Activated T-helper 1 cell treated with anti-CD3 and anti-CD28 coated beads, Interleukin-12 subunit alpha, Interleukin-12 subunit beta, Interleukin-2, Interleukin-4 antibody, amounts not matched to agents 30 ng/mL and 10 ng/mL and 1 ng/mL, durations not matched to agents 14 hours and 24 hours and 36 hours (primary cell): ENCODE measurements at regions of chr14 and their contacts with region 1.

Region 1: GRCh38 chr14:76514613-76515012 is 138.7 kb downstream of the ESRRB start:
- DNase-seq: no peak
- H3K4me3 Mint-ChIP-seq: no peak overlapping the region
- H3K27ac Mint-ChIP-seq: no peak overlapping the region
- H3K4me1 Mint-ChIP-seq: no peaks in the 10 kb centered on the region
- H3K27me3 Mint-ChIP-seq: peaks cover 3% of the 10 kb centered on the region

Region 2: DNA sequence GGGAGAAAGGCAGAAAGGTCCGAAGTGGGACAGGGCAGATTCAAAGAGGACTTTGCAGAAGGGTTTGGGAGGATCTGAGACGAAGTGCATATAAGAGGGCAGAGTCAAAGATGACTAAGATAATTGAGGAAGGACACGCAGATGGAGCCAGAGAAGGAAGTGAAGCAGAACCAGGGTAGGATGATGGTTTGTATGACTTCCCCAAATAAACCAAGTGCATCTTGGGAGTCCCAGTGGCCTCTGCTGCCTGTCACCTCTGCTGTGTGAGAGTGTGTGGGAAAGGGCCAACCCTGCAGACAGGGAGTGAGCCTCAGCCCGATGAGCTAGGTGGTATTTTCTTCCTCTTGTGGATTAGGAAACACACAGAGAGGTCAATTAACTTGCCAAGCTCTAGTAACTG is 899.4 kb before region 1 on chr14:
- intact Hi-C with region 1: no loop called
- DNase-seq: no peak
- H3K4me3 Mint-ChIP-seq: no peak overlapping the region
- H3K27ac Mint-ChIP-seq: no peak overlapping the region
- H3K4me1 Mint-ChIP-seq: no peaks in the 10 kb centered on the region
- H3K27me3 Mint-ChIP-seq: peaks cover 2% of the 10 kb centered on the region

Region 3: GRCh38 chr14:76473481-76474263 is 40.9 kb before region 1 on chr14:
- intact Hi-C with region 1: no loop called
- DNase-seq: no peak
- H3K4me3 Mint-ChIP-seq: no peak overlapping the region
- H3K27ac Mint-ChIP-seq: no peak overlapping the region
- H3K4me1 Mint-ChIP-seq: no peaks in the 10 kb centered on the region
- H3K27me3 Mint-ChIP-seq: peaks cover 6% of the 10 kb centered on the region

Region 4: GRCh38 chr14:76647697-76648298 is 133.2 kb after region 1 on chr14:
- intact Hi-C with region 1: loop called (anchors 10 kb)
- DNase-seq: no peak
- H3K4me3 Mint-ChIP-seq: no peak overlapping the region
- H3K27ac Mint-ChIP-seq: no peak overlapping the region
- H3K4me1 Mint-ChIP-seq: no peaks in the 10 kb centered on the region
- H3K27me3 Mint-ChIP-seq: peaks cover 3% of the 10 kb centered on the region